ENCODE measurements at regions of chr12 and their contacts with region 1.

Region 1: GRCh38 chr12:63853978-63854377 is 9.5 kb downstream of the SRGAP1 start:
- DNase-seq: no peak
- ATAC-seq: no peak
- H3K4me3 ChIP-seq: no peak overlapping the region
- H3K27ac ChIP-seq: no peak overlapping the region
- H3K4me1 ChIP-seq: peaks cover 3% of the 10 kb centered on the region; the same call in 1 of the 2 replicates
- H3K27me3 ChIP-seq: no peaks in the 10 kb centered on the region
- CTCF ChIP-seq: no peak
- POLR2A ChIP-seq: no peak
- RAD21 ChIP-seq: no peak

Region 2: DNA sequence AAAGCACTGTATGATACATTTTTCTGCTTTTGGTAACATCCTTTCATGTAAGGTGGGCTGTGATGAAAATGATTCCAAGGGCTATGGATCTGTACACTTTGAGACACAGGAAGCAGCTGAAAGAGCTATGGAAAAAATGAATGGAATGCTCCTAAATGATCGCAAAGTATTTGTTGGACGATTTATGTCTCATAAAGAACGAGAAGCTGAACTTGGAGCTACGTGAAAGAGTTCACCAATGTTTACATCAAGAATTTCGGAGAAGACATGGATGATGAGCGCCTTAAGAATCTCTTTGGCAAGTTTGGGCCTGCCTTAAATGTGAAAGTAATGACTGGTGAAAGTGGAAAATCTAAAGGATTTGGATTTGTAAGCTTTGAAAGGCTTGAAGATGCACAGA is 31.6 kb before region 1 on chr12:
- CTCF ChIA-PET with region 1: no interaction called
- POLR2A ChIA-PET with region 1: no interaction called
- dilution Hi-C with region 1: no loop called
- in situ Hi-C with region 1: no loop called
- intact Hi-C with region 1: no loop called
- DNase-seq: peak; percentile 82
- ATAC-seq: peak; percentile 73
- H3K4me3 ChIP-seq: peak overlapping the region; percentile 49
- H3K27ac ChIP-seq: peak overlapping the region; percentile 83
- H3K4me1 ChIP-seq: peaks cover 8% of the 10 kb centered on the region
- H3K27me3 ChIP-seq: no peaks in the 10 kb centered on the region
- CTCF ChIP-seq: no peak
- POLR2A ChIP-seq: no peak
- RAD21 ChIP-seq: no peak

Region 3: GRCh38 chr12:63897931-63898330 is 44.0 kb after region 1 on chr12:
- CTCF ChIA-PET with region 1: no interaction called
- POLR2A ChIA-PET with region 1: no interaction called
- dilution Hi-C with region 1: no loop called
- in situ Hi-C with region 1: no loop called
- intact Hi-C with region 1: loop called (anchors 2 kb)
- DNase-seq: no peak
- ATAC-seq: no peak
- H3K4me3 ChIP-seq: no peak overlapping the region
- H3K27ac ChIP-seq: no peak overlapping the region
- H3K4me1 ChIP-seq: peaks cover 11% of the 10 kb centered on the region
- H3K27me3 ChIP-seq: no peaks in the 10 kb centered on the region
- CTCF ChIP-seq: no peak
- POLR2A ChIP-seq: no peak
- RAD21 ChIP-seq: no peak